ENCODE measurements at regions of chr7 and their contacts with region 1.

Region 1: GRCh38 chr7:83936056-83936708 is 258.4 kb downstream of the SEMA3A start:
- DNase-seq: peak; percentile 45
- CTCF ChIP-seq: peak; percentile 77

Region 2: GRCh38 chr7:83947260-83947659 is 11.1 kb after region 1 on chr7:
- CTCF ChIA-PET with region 1: interaction called, 16 read pairs
- POLR2A ChIA-PET with region 1: no interaction called
- DNase-seq: peak; percentile 25
- CTCF ChIP-seq: peak; percentile 40

Region 3: DNA sequence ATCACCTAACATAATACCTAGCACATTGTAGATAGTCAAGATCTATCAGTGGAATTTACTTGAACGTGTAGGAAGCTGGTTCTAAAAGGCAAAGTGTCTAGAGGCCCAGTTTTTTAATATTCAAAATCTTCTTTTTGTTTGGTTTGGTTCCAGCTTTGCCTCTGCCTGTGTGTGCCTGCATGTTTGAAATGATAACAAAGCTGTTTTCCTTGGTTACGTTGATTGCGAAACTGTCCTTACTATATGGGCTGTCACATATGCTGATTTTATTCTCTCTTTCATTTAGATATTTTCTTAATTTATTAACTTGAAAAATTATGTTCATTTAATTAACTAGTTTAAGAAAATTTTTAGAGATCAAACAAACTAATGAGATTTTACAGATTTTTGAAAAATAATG is 21.2 kb after region 1 on chr7:
- CTCF ChIA-PET with region 1: interaction called, 21 read pairs
- POLR2A ChIA-PET with region 1: no interaction called
- DNase-seq: no peak
- CTCF ChIP-seq: no peak

Region 4: DNA sequence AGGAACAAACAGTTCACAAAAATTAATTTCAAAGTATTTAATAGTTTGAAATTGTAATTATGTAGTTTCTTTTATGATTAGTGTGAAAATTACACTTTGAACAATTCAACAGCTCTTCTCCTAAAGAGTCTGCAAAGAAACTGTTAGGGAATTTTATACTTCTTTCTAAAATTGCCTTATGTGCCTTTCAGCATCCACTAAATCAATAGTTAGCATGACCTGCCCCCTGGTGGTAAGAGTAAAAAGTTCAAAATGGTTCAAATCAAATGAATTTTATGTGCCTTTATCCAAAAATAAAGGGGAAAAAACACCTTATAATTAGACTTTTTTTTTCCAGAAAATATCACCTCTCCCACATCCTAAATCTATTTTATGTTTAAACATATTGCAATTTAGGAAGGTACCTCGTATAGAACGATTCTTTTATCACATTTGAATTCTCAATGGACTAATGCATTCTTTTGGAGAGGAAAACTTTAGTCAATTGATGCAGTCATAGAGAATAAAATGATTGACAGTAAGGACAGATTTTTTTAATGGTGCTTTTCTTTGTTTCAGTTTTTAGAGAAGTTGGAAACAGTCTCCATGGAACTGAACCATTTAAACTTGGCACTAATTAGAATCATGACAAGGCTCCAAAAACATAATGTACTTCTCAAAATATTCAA is 1087.0 kb after region 1 on chr7:
- CTCF ChIA-PET with region 1: interaction called, 76 read pairs
- POLR2A ChIA-PET with region 1: no interaction called
- DNase-seq: peak; percentile 3
- CTCF ChIP-seq: peak; percentile 56

Measured in GM10248 (cell line).